CD4-positive, alpha-beta memory T cell (primary cell): ENCODE measurements at regions of chr16 and their contacts with region 1.

Region 1: GRCh38 chr16:57045694-57046381 is 46.5 kb upstream of the CPNE2 start:
- DNase-seq: no peak
- H3K4me3 ChIP-seq: no peak overlapping the region
- H3K4me3 Mint-ChIP-seq: peak overlapping the region in 1 of 8 donors; percentile 9
- H3K27ac ChIP-seq: peak overlapping the region; percentile 21
- H3K27ac Mint-ChIP-seq: peak overlapping the region; percentile 60 to 98 (median 77)
- H3K4me1 ChIP-seq: peaks cover 49% of the 10 kb centered on the region
- H3K4me1 Mint-ChIP-seq: peaks cover 28 to 47% (median 36%) of the 10 kb centered on the region in 4 donors
- H3K27me3 ChIP-seq: no peaks in the 10 kb centered on the region
- H3K27me3 Mint-ChIP-seq: no peaks in the 10 kb centered on the region

Region 2: GRCh38 chr16:56970934-56971767 is 74.7 kb before region 1 on chr16:
- CTCF ChIA-PET with region 1: interaction called, 78 read pairs
- POLR2A ChIA-PET with region 1: interaction called, 41 read pairs
- intact Hi-C with region 1: no loop called
- DNase-seq: peak in 3 of 5 donors; percentile 28 to 67 (median 41)
- H3K4me3 ChIP-seq: no peak overlapping the region
- H3K4me3 Mint-ChIP-seq: peak overlapping the region in 2 of 8 donors; percentile 59
- H3K27ac ChIP-seq: no peak overlapping the region
- H3K27ac Mint-ChIP-seq: peak overlapping the region; percentile 18 to 89 (median 73)
- H3K4me1 ChIP-seq: peaks cover 26% of the 10 kb centered on the region
- H3K4me1 Mint-ChIP-seq: peaks cover 19 to 50% (median 30%) of the 10 kb centered on the region in 4 donors
- H3K27me3 ChIP-seq: no peaks in the 10 kb centered on the region
- H3K27me3 Mint-ChIP-seq: no peaks in the 10 kb centered on the region

Region 3: GRCh38 chr16:57000271-57001025 is 45.4 kb before region 1 on chr16:
- CTCF ChIA-PET with region 1: interaction called, 7 read pairs
- POLR2A ChIA-PET with region 1: interaction called, 91 read pairs
- intact Hi-C with region 1: no loop called
- DNase-seq: peak in 1 of 5 donors; percentile 77
- H3K4me3 ChIP-seq: peak overlapping the region; percentile 36 to 66
- H3K4me3 Mint-ChIP-seq: peak overlapping the region; percentile 71 to 90 (median 81)
- H3K27ac ChIP-seq: peak overlapping the region; percentile 79
- H3K27ac Mint-ChIP-seq: peak overlapping the region; percentile 89 to 98 (median 97)
- H3K4me1 ChIP-seq: peaks cover 95% of the 10 kb centered on the region
- H3K4me1 Mint-ChIP-seq: peaks cover 69 to 99% (median 84%) of the 10 kb centered on the region in 4 donors
- H3K27me3 ChIP-seq: no peaks in the 10 kb centered on the region
- H3K27me3 Mint-ChIP-seq: no peaks in the 10 kb centered on the region

Region 4: DNA sequence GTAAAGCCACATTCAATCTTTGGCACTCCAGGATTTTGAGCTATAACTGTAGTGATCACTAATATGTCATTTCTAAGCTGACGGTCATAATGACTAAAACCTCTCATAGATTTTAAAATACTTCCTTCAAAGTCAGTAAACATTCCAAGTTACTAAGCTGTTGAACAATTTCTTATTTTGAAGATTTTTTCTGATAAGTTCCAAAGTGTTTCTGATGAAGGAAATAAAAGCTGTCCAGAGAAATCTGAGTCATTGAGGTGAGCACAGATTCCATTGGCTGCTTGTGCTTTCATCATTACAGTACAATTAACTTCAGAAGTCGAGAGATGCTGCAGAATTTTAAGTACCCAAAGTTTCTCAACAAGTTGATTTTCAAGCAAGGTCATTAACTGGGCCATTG is 32.6 kb before region 1 on chr16:
- CTCF ChIA-PET with region 1: interaction called, 7 read pairs
- POLR2A ChIA-PET with region 1: interaction called, 90 read pairs
- intact Hi-C with region 1: loop called (anchors 1 kb)
- DNase-seq: no peak
- H3K4me3 ChIP-seq: no peak overlapping the region
- H3K4me3 Mint-ChIP-seq: peak overlapping the region in 6 of 8 donors; percentile 63 to 89 (median 78)
- H3K27ac ChIP-seq: peak overlapping the region; percentile 79
- H3K27ac Mint-ChIP-seq: peak overlapping the region; percentile 83 to 98 (median 97)
- H3K4me1 ChIP-seq: peaks cover 98% of the 10 kb centered on the region
- H3K4me1 Mint-ChIP-seq: peaks cover 52 to 90% (median 69%) of the 10 kb centered on the region in 4 donors
- H3K27me3 ChIP-seq: no peaks in the 10 kb centered on the region
- H3K27me3 Mint-ChIP-seq: no peaks in the 10 kb centered on the region

Region 5: DNA sequence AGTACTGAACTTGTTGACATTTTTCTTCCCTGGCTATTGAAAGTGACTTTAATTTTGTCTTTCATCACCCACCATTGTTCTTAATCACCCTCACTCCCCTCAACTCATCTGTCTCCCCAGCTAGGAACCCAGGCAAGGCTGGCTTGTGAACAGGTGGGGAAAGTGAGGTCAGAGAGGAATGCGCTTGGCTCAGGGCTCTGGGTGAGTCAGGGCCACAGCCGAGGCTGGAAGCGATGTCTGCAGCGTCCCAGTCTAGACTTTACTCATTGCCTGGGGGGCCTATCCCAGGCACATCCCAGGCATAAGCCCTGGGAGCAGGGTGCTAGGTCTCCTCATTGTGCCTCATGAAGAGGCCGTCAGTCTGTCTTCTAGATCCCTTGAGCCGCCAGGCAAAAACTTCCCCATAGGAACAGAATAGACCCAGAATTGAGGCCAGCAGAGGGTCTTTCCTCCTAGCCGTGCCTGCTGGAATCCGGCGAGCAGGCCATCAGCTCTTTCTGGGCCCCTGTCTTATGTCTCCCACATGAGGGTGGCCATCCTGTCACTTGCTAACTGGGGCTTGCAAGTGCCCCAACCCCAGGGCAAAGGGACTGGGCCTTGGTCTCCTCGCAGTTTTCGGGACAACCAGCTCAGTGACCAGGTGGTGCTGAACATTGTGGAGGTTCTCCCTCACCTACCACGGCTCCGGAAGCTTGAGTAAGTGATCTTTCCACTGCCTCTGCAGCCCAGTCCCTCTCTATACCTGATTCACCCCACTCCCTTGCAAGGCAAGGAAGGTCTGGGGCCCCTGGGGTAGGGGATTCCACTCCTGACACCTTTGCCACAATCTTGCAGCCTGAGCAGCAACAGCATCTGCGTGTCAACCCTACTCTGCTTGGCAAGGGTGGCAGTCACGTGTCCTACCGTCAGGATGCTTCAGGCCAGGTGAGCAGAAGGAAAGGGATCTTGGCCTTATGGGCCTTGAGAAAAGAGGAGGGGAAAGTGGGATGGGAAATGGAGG is 16.4 kb before region 1 on chr16:
- CTCF ChIA-PET with region 1: interaction called, 28 read pairs
- POLR2A ChIA-PET with region 1: interaction called, 162 read pairs
- intact Hi-C with region 1: no loop called
- DNase-seq: no peak
- H3K4me3 ChIP-seq: no peak overlapping the region
- H3K4me3 Mint-ChIP-seq: peak overlapping the region in 1 of 8 donors; percentile 4
- H3K27ac ChIP-seq: no peak overlapping the region
- H3K27ac Mint-ChIP-seq: peak overlapping the region; percentile 29 to 87 (median 78)
- H3K4me1 ChIP-seq: peaks cover 82% of the 10 kb centered on the region
- H3K4me1 Mint-ChIP-seq: peaks cover 31 to 91% (median 63%) of the 10 kb centered on the region in 4 donors
- H3K27me3 ChIP-seq: no peaks in the 10 kb centered on the region
- H3K27me3 Mint-ChIP-seq: no peaks in the 10 kb centered on the region